Ascending aorta (tissue), 2 donors: ENCODE measurements at regions of chrX and their contacts with region 1.

Region 1: GRCh38 chrX:103404231-103405208 is 28.2 kb downstream of the BEX3 start:
- DNase-seq: peak; percentile 24 to 87
- H3K4me3 ChIP-seq: peak overlapping the region; percentile 51 to 63
- H3K27ac ChIP-seq: peak overlapping the region; percentile 37 to 58
- H3K4me1 ChIP-seq: no peaks in the 10 kb centered on the region
- H3K27me3 ChIP-seq: no peaks in the 10 kb centered on the region
- CTCF ChIP-seq: no peak

Region 2: DNA sequence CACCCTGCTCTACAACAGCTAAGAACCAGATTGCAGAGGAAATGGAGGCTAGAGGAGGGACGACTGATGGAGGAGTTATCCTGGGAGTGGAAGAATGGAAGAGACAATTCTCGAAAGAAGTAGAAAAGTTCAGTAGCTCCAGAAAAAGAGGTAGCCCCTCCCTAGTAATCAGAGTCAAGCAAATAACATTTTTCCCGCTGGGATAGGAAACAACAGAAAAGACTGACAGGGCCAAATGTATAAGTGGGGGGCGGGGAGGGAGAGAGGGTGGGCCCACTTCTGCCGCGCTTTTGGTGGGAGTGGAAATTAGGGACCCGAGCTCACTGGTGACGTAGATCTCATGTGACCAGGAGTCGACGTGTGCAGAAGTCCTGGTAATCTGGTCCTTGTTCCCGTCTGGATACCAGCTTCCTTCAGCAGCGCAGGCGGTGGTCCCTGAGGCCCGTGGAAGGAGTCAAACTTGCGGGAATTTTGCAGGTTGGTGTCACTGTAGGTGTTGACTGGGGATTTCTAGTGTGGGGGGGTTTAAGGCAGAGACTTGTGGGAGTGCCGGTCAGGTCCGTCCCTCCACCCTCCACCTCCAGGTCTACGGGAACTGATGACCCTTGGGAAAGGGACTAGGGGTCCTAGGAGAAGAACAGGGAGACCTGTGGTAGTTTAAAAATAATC is 48.3 kb before region 1 on chrX and contains the start of gene TCEAL9:
- intact Hi-C with region 1: loop called (anchors 1 kb)
- DNase-seq: peak in 1 of 2 donors; percentile 79
- H3K4me3 ChIP-seq: peak within 1 kb of the TSS; percentile 68 to 72
- H3K27ac ChIP-seq: peak within 1 kb of the TSS; percentile 86 to 89
- H3K4me1 ChIP-seq: no peaks in the 10 kb centered on the region
- H3K27me3 ChIP-seq: no peaks in the 10 kb centered on the region
- CTCF ChIP-seq: no peak
- total RNA-seq, gene TCEAL9: 20.9 TPM

Region 3: DNA sequence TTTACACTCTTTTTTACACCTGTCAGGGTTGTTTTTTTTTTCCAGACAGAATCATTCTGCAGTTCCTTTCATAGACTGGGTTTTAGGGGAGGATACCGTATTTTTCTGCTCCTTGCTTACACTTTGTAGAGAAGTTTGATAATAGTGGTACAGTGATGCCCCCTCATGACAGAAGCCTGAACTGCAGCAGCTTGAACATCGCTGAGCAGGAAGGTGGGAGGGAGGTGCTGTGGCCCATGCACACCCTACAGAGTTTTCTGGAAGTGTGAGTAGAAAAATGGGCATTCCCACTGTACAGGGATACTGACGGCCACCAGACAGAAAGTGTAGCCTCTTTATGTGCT is 60.2 kb after region 1 on chrX:
- intact Hi-C with region 1: loop called (anchors 2 kb)
- DNase-seq: peak in 1 of 2 donors; percentile 81
- H3K4me3 ChIP-seq: peak overlapping the region; percentile 33 to 61
- H3K27ac ChIP-seq: no peak overlapping the region
- H3K4me1 ChIP-seq: no peaks in the 10 kb centered on the region
- H3K27me3 ChIP-seq: no peaks in the 10 kb centered on the region
- CTCF ChIP-seq: peak; percentile 52 to 73 (median 69)